ENCODE measurements at regions of chr14 and their contacts with region 1.

Region 1: DNA sequence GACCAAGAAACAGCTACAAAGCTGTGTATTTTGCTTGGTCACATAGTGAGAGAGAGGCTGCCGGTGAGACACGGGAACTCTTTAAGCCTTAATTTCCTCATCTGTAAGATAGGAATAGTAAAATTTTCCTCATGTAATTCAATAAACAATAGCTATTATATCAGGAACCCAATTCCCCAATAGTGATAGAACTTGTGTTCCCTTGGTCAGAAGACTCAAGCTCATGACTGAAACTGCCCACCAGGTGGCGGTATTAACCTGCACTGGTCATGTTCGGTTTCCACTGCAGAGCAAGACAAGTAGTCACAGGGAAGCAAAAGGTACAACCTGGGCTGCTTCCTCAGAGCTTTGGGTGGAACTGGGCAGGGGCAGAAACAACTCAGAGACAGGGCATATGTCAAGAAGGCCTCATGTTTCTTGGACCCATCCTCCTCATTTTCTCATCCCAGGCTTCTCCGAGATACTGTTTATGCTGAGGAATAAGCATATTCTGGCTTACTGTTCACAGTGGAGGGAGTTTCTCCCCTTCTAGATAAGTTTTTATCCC is 4.2 kb upstream of the AJUBA start:
- DNase-seq: peak; percentile 94
- ATAC-seq: peak; percentile 49
- H3K4me3 ChIP-seq: no peak overlapping the region
- H3K27ac ChIP-seq: no peak overlapping the region
- H3K4me1 ChIP-seq: no peaks in the 10 kb centered on the region; the same call in 1 of the 2 replicates
- H3K27me3 ChIP-seq: no peaks in the 10 kb centered on the region
- CTCF ChIP-seq: peak; percentile 95

Region 2: DNA sequence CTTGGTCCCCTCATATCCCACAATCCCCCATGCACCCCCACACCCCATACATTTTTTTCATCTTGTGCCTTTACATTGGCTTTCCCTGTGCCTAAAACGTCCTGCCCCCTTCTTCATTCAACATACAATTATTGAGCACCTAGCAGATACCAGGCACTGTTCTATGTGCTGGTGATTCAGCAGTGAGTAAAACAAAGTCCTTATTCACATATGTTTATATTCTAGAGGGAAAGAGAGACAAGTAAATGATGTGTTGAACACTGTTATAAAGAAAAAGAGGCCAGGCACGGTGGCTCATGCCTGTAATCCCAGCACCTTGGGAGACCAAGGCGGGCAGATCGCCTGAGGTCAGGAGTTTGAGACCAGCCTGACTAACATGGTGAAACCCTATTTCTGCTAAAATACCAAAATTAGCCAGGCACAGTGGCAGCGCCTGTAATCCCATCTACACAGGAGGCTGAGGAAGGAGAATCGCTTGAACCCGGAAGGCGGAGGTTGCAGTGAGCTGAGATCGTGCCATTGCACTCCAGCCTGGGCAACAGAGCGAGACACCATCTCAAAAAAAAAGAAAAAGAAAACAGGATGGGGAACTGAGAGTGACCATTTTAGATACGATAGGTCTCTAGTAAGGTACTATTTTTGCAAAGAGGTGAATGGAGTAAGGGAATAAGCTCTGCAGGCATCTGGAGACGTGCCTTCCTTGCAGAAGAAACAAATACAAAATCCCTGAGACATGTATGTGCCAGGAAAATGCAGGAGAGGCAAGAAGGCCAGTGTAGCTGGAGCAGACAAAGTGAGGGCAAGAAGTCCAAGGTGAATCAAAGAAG is 183.5 kb before region 1 on chr14:
- CTCF ChIA-PET with region 1: no interaction called
- POLR2A ChIA-PET with region 1: no interaction called
- intact Hi-C with region 1: no loop called
- DNase-seq: no peak
- ATAC-seq: no peak
- H3K4me3 ChIP-seq: no peak overlapping the region
- H3K27ac ChIP-seq: no peak overlapping the region
- H3K4me1 ChIP-seq: no peaks in the 10 kb centered on the region
- H3K27me3 ChIP-seq: no peaks in the 10 kb centered on the region
- CTCF ChIP-seq: no peak

Region 3: DNA sequence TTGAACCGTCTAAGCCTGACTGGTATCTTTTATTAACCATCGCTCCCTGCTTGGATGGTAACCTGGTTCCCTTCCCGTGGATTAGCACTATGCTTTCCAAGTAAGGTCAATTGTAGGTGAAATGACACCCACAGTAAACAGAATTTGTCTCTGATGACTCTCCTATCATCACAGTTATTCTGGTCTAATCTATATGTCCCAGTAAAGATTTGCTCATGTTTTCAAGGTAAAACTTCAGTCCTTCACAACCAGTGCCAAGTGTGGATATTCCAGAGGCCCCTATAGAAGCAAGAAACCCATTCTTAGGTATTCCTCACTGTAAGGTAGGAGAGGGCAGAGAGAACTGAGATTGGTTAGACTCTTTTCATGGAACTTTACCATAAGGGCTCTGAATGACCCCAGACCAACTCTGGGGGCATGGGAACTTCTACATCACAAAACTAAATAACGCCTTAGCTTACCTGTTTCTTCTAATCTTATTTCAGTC is 19.8 kb before region 1 on chr14:
- CTCF ChIA-PET with region 1: interaction called, 27 read pairs
- POLR2A ChIA-PET with region 1: interaction called, 20 read pairs
- intact Hi-C with region 1: no loop called
- DNase-seq: no peak
- ATAC-seq: no peak
- H3K4me3 ChIP-seq: no peak overlapping the region
- H3K27ac ChIP-seq: no peak overlapping the region
- H3K4me1 ChIP-seq: no peaks in the 10 kb centered on the region
- H3K27me3 ChIP-seq: no peaks in the 10 kb centered on the region
- CTCF ChIP-seq: no peak

Region 4: GRCh38 chr14:23006544-23007419 is 20.2 kb after region 1 on chr14:
- CTCF ChIA-PET with region 1: interaction called, 16 read pairs
- POLR2A ChIA-PET with region 1: interaction called, 8 read pairs
- intact Hi-C with region 1: no loop called
- DNase-seq: peak; percentile 98
- ATAC-seq: peak; percentile 92
- H3K4me3 ChIP-seq: peak overlapping the region; percentile 73
- H3K27ac ChIP-seq: peak overlapping the region; percentile 90
- H3K4me1 ChIP-seq: peaks cover 40% of the 10 kb centered on the region
- H3K27me3 ChIP-seq: no peaks in the 10 kb centered on the region
- CTCF ChIP-seq: peak; percentile 36; the same call in 1 of the 2 replicates

Region 5: DNA sequence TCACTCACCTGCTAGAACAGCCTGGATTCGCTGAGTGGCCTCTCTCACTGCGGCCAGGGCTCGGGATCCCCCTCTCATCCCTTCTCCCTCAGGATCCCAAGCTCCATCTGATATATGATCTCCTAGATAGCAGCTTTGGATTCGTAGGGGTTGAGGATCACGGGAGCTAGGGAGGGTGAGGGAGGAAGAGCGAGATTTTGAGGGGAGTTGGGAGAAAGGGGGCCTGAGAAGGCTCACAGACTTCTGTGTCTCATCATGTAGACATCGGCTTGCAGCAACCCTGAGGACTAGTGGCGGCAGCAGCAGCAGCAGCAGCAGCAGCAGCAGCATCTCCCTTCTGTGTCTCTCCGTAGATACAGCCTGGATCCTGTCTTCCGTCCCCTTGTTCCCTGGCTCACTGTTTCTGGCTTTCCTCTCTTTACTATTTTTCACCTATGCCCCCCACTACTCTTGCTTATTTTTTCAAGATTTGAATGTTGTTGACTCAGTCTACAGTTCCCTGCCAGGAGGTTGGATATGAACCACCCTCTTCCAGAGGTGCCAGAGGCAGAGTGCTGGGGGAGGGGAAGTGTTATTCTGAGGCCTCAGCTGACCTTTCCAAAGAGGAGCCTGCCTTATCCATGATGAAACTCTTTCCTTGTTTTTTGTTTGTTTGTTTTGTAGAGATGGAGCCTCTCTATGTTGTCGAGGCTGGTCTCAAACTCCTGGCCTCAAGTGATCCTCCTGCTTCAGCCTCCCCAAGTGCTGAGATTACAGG is 118.2 kb after region 1 on chr14 and contains the start of gene CIROP:
- CTCF ChIA-PET with region 1: interaction called, 5 read pairs
- POLR2A ChIA-PET with region 1: no interaction called
- intact Hi-C with region 1: loop called (anchors 5 kb)
- DNase-seq: no peak
- ATAC-seq: no peak
- H3K4me3 ChIP-seq: no peak within 1 kb of the TSS
- H3K27ac ChIP-seq: no peak within 1 kb of the TSS
- H3K4me1 ChIP-seq: no peaks in the 10 kb centered on the region
- H3K27me3 ChIP-seq: no peaks in the 10 kb centered on the region
- CTCF ChIP-seq: no peak
- total RNA-seq, gene CIROP: not detected in 2 replicates

Measured in PC-3 (cell line).